Activated T-helper 1 cell treated with anti-CD3 and anti-CD28 coated beads, Interleukin-12 subunit alpha, Interleukin-12 subunit beta, Interleukin-2, Interleukin-4 antibody, amounts not matched to agents 30 ng/mL and 10 ng/mL and 1 ng/mL, durations not matched to agents 14 hours and 24 hours and 36 hours (primary cell): ENCODE measurements at regions of chr17 and their contacts with region 1.

Region 1: GRCh38 chr17:75034236-75034908 is 12.4 kb downstream of the ATP5PD start:
- DNase-seq: peak; percentile 79
- H3K4me3 Mint-ChIP-seq: peak overlapping the region; percentile 93
- H3K27ac Mint-ChIP-seq: peak overlapping the region; percentile 94
- H3K4me1 Mint-ChIP-seq: peaks cover 52% of the 10 kb centered on the region
- H3K27me3 Mint-ChIP-seq: peaks cover 10% of the 10 kb centered on the region

Region 2: GRCh38 chr17:74987418-74987908 is 46.9 kb before region 1 on chr17 and contains the start of gene CDR2L:
- intact Hi-C with region 1: loop called (anchors 1 kb)
- DNase-seq: peak; percentile 89
- H3K4me3 Mint-ChIP-seq: peak within 1 kb of the TSS; percentile 83
- H3K27ac Mint-ChIP-seq: no peak within 1 kb of the TSS
- H3K4me1 Mint-ChIP-seq: peaks cover 7% of the 10 kb centered on the region
- H3K27me3 Mint-ChIP-seq: peaks cover 54% of the 10 kb centered on the region
- total RNA-seq, gene CDR2L: 1.1 and 1.3 TPM in 2 replicates

Region 3: DNA sequence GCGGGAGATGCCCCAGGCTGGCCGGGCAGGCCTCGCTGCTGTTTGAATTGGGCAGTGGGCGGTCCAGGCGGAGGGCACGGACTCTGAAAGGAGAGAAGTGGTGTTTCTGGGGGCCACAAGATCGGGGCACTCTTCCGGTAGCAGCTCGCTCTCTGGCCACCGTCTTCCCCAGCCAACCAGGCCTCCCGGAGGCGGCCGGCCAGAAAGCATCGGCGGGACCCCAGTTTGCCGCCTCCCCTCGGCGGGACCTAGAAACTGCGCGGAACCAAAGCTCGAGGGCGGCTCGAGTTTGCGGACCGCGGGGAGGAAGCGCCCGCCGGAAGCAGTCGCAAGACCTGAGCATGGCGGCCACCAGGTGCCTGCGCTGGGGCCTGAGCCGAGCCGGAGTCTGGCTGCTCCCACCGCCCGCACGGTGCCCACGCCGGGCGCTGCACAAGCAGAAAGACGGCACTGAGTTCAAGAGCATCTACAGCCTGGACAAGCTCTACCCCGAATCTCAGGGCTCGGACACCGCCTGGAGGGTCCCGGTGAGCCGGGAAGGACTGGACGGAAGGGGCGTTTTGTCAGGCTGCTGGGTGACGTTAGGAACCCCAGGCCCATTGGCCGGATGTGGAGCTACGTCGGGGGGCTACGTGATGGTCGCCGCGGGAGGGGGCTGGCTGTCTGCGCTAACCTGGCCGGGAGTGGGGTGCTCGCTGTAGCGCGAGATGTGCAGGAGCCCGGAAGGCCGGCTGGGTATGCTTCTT is 21.9 kb before region 1 on chr17 and contains the start of gene MRPL58:
- intact Hi-C with region 1: loop called (anchors 1 kb)
- DNase-seq: peak; percentile 75
- H3K4me3 Mint-ChIP-seq: peak within 1 kb of the TSS; percentile 95
- H3K27ac Mint-ChIP-seq: peak within 1 kb of the TSS; percentile 88
- H3K4me1 Mint-ChIP-seq: peaks cover 17% of the 10 kb centered on the region
- H3K27me3 Mint-ChIP-seq: no peaks in the 10 kb centered on the region
- total RNA-seq, gene MRPL58: 77.8 and 78.1 TPM in 2 replicates

Region 4: GRCh38 chr17:75069783-75070182 is 35.4 kb after region 1 on chr17:
- intact Hi-C with region 1: loop called (anchors 1 kb)
- DNase-seq: no peak
- H3K4me3 Mint-ChIP-seq: no peak overlapping the region
- H3K27ac Mint-ChIP-seq: no peak overlapping the region
- H3K4me1 Mint-ChIP-seq: peaks cover 26% of the 10 kb centered on the region
- H3K27me3 Mint-ChIP-seq: no peaks in the 10 kb centered on the region

Region 5: DNA sequence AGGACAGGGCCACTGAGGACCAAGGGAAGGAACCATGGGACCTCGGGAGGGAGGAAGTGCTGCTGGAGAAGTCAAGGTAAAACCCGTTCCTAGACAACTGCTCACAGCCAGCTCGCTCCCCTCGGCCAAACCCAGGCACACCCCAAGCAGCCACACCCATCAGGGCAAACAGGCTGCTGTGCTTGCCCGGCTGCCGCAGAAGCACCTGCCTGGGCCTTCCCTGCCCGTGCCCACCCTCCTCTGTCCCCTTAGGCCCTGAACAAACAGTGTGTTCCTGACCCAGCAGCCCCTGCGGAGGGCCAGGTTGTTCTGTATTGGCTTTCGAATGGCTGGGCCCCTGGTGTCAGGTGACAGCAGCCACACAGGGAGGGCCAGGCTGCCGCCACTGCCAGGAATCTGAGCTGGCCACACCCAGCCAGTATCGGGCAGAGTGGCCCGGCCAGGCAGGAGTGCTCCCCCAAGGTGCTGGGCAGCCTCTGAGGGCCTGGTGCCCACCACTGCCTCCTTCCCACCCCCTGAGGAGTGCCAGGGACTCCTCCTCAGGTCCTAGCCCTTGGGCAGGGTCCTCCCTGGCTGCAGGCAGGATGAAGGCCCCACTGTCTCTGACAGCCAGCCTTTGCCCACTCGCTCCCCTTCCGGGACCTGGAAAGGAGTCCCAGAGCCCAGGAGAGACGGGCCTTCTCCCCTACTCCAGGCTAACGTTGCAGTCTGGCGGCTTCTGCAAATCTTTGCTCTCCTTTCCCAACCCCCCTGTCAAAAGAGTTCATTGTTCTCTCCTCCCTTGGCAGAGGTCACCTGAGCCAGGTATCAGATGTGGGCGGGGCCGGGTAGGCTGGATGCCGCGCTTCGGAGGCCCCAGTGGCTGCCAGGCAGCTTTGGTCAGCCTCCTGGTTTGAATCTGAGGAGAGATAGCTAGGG is 515.1 kb after region 1 on chr17:
- intact Hi-C with region 1: no loop called
- DNase-seq: no peak
- H3K4me3 Mint-ChIP-seq: no peak overlapping the region
- H3K27ac Mint-ChIP-seq: no peak overlapping the region
- H3K4me1 Mint-ChIP-seq: no peaks in the 10 kb centered on the region
- H3K27me3 Mint-ChIP-seq: peaks cover 2% of the 10 kb centered on the region